ENCODE measurements at regions of chr6 and their contacts with region 1.

Region 1: GRCh38 chr6:30828027-30828960 is 56.0 kb upstream of the DDR1 start:
- H3K4me3 ChIP-seq: no peak overlapping the region
- H3K27ac ChIP-seq: no peak overlapping the region
- H3K4me1 ChIP-seq: no peaks in the 10 kb centered on the region
- CTCF ChIP-seq: peak; percentile 79

Region 2: GRCh38 chr6:30857549-30857948 is 29.3 kb after region 1 on chr6:
- CTCF ChIA-PET with region 1: interaction called, 20 read pairs
- POLR2A ChIA-PET with region 1: no interaction called
- H3K4me3 ChIP-seq: no peak overlapping the region
- H3K27ac ChIP-seq: no peak overlapping the region
- H3K4me1 ChIP-seq: peaks cover 10% of the 10 kb centered on the region
- CTCF ChIP-seq: no peak

Region 3: DNA sequence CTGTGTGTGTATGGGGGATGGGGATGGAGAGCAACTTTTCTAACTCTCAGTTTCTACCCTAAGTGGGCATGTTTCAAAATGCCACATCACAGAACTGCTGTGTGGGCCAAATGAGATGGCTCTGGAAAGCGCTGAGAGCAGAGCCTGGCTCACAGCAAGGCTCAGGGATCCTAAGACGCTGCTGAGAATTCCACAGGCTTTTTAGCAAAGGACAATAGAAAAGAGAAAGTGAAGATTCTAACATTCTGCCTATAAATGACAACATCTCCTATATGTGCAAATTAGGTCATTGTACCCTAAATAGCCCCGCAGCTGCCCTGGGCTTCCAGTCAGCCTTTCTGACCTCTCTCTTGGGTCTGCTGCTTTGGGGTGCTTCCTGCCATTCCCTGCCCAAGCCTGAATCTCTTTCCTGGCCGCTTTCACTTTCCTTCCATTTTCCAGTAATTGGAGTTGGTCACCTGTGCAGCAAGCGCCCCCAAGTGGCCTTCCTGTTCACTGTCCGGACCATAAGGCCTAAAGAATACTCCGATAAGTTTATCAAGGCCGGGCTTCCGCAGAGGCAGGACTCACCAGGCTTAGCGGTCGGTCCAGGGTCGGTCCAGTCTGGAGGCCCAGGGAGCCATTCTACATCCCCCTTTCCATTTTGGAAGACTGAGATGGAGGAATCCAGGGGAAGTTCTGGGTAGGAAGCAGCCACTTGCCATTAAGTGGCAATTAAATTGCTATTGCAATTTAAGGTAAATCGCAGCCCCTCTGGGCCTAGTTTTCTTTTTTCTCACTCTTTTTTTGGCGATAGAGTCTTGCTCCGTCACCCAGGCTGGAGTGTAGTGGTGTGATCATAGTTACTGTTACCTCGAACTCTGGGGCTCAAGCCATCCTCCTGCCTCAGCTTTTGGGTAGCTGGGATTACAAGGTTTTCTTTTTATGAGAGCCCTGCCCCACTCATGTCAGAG is 49.4 kb after region 1 on chr6:
- CTCF ChIA-PET with region 1: interaction called, 332 read pairs
- POLR2A ChIA-PET with region 1: interaction called, 5 read pairs
- H3K4me3 ChIP-seq: peak overlapping the region; percentile 20
- H3K27ac ChIP-seq: no peak overlapping the region; the same call in 1 of the 2 replicates
- H3K4me1 ChIP-seq: no peaks in the 10 kb centered on the region; the same call in 1 of the 2 replicates
- CTCF ChIP-seq: peak; percentile 89

Region 4: GRCh38 chr6:30935018-30935417 is 106.7 kb after region 1 on chr6:
- CTCF ChIA-PET with region 1: no interaction called
- POLR2A ChIA-PET with region 1: no interaction called
- H3K4me3 ChIP-seq: no peak overlapping the region
- H3K27ac ChIP-seq: no peak overlapping the region
- H3K4me1 ChIP-seq: no peaks in the 10 kb centered on the region
- CTCF ChIP-seq: no peak

Region 5: DNA sequence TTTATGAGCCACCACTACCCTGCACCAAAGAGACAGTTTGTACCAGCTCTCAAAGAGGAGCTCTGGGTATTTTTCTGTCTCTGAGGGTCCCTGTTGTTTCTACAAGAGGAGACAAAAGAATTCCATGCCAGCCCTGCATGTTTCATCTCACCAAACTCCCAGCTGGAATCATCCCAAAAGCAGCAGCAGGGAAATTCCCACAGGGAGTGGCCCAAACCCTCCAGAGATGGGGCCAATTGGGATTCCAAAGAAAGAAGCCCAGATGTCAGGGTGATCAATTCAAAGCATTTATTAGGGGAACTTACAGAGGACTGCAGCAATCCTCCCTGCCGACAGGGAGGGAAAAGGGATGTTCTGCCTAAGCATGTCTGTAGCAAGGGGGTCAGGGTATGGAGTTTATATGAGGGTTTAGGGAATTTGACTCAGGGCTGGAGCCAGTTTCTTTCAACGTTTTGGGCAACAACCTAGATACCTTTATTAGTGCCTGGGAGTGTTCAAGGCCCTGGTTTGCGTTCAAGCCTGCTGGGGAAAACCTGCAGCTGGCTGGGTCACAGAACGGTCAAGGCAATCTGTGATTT is 229.2 kb after region 1 on chr6:
- CTCF ChIA-PET with region 1: no interaction called
- POLR2A ChIA-PET with region 1: no interaction called
- H3K4me3 ChIP-seq: no peak overlapping the region
- H3K27ac ChIP-seq: no peak overlapping the region
- H3K4me1 ChIP-seq: no peaks in the 10 kb centered on the region
- CTCF ChIP-seq: no peak

Measured in HEK293 (cell line).